AG04449 (cell line): ENCODE measurements at regions of chr18 and their contacts with region 1.

Region 1: GRCh38 chr18:59402432-59403090 is 43.5 kb upstream of the LMAN1 start:
- DNase-seq: peak; percentile 17
- H3K4me3 ChIP-seq: no peak overlapping the region
- CTCF ChIP-seq: peak; percentile 97

Region 2: GRCh38 chr18:58768293-58768974 is 634.1 kb before region 1 on chr18:
- CTCF ChIA-PET with region 1: interaction called, 24 read pairs
- POLR2A ChIA-PET with region 1: no interaction called
- DNase-seq: no peak
- H3K4me3 ChIP-seq: peak overlapping the region; percentile 42
- CTCF ChIP-seq: peak; percentile 93

Region 3: GRCh38 chr18:59228351-59228750 is 174.2 kb before region 1 on chr18:
- CTCF ChIA-PET with region 1: interaction called, 19 read pairs
- POLR2A ChIA-PET with region 1: no interaction called
- DNase-seq: peak; percentile 55
- H3K4me3 ChIP-seq: no peak overlapping the region
- CTCF ChIP-seq: no peak

Region 4: DNA sequence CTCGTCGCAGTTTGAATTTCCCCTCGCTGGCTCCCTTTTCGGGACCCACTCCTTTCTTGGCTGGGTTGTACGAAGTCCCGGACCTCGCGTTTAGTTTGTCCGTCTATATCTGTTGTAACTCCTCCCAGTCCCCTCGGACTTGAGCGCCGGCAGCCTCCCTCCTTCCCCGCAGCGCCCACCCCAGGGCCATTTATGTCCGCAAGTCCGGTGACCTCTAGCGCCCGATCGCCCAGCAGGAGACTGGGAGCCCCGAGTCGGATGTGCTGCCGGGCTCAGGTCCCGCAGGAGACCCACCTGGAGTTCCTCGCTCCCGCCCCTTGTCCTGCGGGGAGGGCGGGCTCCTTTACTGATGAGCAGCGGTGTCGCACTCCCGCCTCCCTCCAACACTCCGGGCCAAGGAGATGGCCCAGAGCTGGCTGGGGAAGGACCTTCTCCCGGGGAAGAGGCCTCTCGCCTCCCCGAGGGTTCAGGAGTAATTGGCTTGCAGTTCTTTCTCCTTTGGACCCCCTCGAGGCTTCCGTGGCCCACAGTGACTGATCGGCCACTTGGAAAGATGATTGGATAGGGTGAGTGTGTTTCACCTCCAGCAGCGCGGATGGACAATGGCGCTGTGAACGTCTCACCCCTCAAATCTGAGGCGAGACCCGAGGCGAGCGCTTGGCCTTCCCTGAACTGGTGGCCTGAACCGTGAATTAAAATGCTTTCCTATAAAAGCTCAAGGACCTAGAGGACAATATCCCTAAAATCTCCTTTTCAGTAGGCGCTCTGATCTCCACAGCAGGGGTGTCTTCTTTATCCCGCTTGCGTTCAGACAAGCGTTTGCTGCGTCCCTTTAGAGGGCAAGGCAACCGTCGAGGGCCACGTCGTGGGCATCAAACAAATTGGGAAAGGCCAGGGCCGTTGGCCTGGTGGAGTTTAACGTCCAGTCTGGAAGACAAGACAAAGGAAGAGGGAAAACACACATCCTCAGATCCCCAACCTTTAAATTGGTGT is 128.3 kb before region 1 on chr18:
- CTCF ChIA-PET with region 1: interaction called, 29 read pairs
- POLR2A ChIA-PET with region 1: no interaction called
- DNase-seq: no peak
- H3K4me3 ChIP-seq: no peak overlapping the region
- CTCF ChIP-seq: no peak

Region 5: GRCh38 chr18:59353079-59353680 is 49.4 kb before region 1 on chr18:
- CTCF ChIA-PET with region 1: interaction called, 19 read pairs
- POLR2A ChIA-PET with region 1: no interaction called
- DNase-seq: no peak
- H3K4me3 ChIP-seq: no peak overlapping the region
- CTCF ChIP-seq: no peak

Region 6: DNA sequence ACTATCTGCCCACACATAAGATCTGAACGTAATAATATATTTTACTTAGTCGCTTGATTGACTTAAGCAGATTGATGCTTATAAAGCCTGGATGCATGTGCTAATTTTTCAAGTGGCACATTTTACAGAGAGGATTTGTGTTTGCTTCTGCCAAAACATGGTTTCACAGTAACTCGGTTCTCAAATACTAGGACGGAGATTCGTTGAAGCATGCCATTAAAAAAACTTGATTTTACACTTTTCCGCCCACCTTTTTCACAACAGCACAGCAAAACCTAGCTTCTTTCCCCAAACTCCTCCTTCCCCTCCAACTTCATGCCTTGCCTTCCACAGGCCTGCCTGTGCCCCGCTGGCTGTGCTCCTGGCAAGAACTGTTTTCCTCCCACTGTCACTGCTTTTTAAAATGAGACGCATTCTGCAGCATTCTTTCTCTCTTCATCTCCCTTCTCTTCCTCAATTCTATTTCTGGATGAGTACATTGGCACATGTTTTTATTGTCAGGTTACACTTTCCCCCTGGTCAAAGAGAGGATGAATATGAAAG is 11.6 kb after region 1 on chr18:
- CTCF ChIA-PET with region 1: interaction called, 11 read pairs
- POLR2A ChIA-PET with region 1: no interaction called
- DNase-seq: no peak
- H3K4me3 ChIP-seq: no peak overlapping the region
- CTCF ChIP-seq: no peak

Region 7: DNA sequence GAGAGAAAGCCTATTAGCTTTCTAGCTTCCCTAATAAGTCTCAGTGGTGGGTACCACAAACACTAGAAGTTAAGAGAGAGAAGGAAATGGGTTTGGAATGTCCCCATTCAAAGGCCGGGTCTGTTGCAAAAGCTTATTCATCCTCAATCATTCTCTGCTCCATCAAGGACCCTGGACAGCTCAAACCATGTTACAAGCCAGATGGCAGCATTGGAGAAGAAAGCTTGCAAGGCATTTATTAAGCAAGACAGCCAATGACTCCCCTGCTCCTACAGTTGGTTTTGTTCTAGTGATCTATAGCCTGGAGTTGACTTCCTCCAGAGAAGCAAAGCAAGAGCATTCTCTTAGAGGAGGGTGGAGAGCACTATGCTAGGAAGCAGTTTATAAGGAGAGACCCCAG is 43.5 kb after region 1 on chr18:
- CTCF ChIA-PET with region 1: no interaction called
- POLR2A ChIA-PET with region 1: no interaction called
- DNase-seq: no peak
- H3K4me3 ChIP-seq: no peak overlapping the region
- CTCF ChIP-seq: no peak

Region 8: DNA sequence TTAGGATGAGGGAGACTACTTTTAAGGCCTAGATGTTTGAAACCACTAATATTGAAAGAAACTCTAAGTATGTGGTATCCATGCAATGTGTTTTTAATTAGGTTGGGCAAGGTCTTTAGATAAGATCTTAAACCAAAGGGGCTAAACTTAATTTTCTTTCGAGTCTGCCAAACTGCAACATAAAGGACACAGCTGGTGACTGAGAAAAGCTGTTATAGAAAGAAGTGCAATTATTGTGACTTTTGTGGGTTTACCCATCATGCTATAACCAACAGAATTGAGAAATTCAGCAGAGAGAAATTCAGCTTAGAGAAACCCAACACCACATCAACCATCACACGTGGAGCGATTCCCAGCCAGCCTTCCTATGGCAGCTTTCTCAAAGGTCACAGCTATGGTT is 76.0 kb after region 1 on chr18:
- CTCF ChIA-PET with region 1: no interaction called
- POLR2A ChIA-PET with region 1: no interaction called
- DNase-seq: no peak
- H3K4me3 ChIP-seq: no peak overlapping the region
- CTCF ChIP-seq: no peak

Region 9: GRCh38 chr18:59733421-59733820 is 330.9 kb after region 1 on chr18:
- CTCF ChIA-PET with region 1: no interaction called
- POLR2A ChIA-PET with region 1: no interaction called
- DNase-seq: no peak
- H3K4me3 ChIP-seq: no peak overlapping the region
- CTCF ChIP-seq: no peak